IMR-90 (cell line): ENCODE measurements at regions of chr7 and their contacts with region 1.

Region 1: DNA sequence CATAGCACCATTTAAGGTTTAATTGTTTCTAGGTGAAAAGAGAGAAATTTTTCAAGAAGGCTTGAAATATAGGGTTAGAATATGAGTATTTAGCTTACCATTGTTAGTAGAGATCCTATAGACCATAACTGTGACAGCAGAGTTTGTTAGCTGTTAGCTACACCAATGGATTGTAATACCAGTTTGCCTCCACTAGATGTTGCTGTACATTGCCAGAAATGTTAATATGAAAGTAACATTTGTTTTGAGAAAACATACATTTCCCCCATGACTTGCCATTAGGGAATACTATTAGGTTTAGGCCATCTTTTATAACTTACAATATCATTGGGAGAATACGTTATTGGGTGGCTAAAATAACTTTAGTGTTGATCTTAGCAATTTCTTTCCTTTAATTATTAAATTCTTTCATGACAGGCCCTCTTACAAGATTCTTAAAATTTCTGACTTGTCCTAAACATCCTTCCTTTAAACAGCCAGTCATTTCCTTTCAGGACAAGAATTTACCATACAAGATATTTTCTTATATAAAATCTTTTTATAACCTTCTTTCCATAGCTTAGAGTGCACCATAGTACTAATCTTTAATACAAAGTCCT is 39.5 kb downstream of the ZNF117 start:
- DNase-seq: peak; percentile 54
- ATAC-seq: peak; percentile 94
- H3K4me3 ChIP-seq: no peak overlapping the region
- H3K27ac ChIP-seq: no peak overlapping the region
- H3K4me1 ChIP-seq: no peaks in the 10 kb centered on the region
- H3K27me3 ChIP-seq: peaks cover 20% of the 10 kb centered on the region
- CTCF ChIP-seq: peak; percentile 82
- POLR2A ChIP-seq: no peak
- RAD21 ChIP-seq: peak; percentile 84

Region 2: GRCh38 chr7:65307651-65308299 is 356.4 kb after region 1 on chr7:
- CTCF ChIA-PET with region 1: interaction called, 15 read pairs
- POLR2A ChIA-PET with region 1: no interaction called
- dilution Hi-C with region 1: no loop called
- in situ Hi-C with region 1: loop called (anchors 5 kb)
- intact Hi-C with region 1: loop called (anchors 1 kb)
- DNase-seq: peak; percentile 66
- ATAC-seq: peak; percentile 98
- H3K4me3 ChIP-seq: no peak overlapping the region
- H3K27ac ChIP-seq: no peak overlapping the region
- H3K4me1 ChIP-seq: no peaks in the 10 kb centered on the region
- H3K27me3 ChIP-seq: no peaks in the 10 kb centered on the region
- CTCF ChIP-seq: peak; percentile 81
- POLR2A ChIP-seq: no peak
- RAD21 ChIP-seq: peak; percentile 86